ENCODE measurements at regions of chr3 and their contacts with region 1.

Region 1: DNA sequence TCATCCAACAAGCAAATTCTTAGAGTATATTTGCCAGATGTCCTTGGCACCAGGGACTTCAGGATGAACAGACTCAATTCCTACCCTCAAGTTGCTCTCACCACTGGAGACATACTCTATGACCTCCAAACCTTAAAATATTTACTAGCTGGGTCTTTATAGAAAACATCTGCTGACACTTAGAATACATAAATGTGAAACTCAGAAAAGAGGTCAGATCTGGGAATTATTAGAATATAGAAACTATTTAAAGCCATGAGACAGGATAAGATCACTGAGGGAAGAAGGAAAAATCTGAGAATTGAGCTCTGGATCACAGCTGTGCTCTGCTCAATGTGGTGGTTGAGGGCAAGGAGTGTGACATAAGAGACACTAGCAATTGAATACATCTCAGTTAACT is 695.4 kb upstream of the UBE2E2 start:
- DNase-seq: no peak
- CTCF ChIP-seq: no peak

Region 2: GRCh38 chr3:22244761-22245521 is 262.8 kb before region 1 on chr3:
- CTCF ChIA-PET with region 1: no interaction called
- POLR2A ChIA-PET with region 1: no interaction called
- DNase-seq: no peak
- CTCF ChIP-seq: no peak

Region 3: DNA sequence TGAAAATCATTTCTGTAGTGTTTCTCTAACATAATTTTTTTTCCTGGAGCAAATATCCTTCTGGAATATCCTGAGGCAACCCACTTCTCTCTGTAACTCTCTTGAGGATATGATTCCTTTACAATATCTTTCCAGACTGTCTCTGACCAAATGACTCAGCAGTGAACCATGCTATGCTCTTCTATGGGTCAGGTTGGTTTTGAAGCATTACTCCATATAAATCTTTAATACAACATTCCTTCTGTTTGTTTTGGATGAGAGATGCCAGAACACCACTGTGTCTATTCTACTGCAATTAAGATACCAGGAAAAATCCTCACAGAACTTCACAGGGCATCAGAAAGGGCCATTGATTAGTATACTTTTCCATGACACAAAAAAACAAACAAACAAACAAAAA is 130.3 kb before region 1 on chr3:
- CTCF ChIA-PET with region 1: no interaction called
- POLR2A ChIA-PET with region 1: no interaction called
- DNase-seq: no peak
- CTCF ChIP-seq: no peak

Region 4: DNA sequence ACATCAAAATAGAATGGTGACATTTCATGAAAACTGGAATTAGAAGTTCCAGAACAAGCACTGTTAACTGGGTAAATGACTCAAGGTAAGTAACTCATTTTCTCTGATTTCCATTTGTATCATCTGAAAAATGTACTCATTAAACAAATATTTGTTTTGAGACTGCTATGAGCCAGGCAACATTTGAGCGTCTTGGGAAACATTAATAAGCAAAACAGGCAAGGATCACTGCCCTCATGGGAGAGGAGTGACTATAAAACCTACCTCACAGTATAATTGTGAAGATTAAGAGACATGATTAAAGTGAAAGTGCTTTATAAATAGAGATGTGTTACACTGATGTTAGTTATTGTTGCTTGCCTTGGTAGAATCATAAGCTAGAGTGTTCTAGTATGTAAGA is 16.4 kb before region 1 on chr3:
- CTCF ChIA-PET with region 1: interaction called, 10 read pairs
- POLR2A ChIA-PET with region 1: no interaction called
- DNase-seq: no peak
- CTCF ChIP-seq: no peak

Region 5: GRCh38 chr3:22526266-22526837 is 18.6 kb after region 1 on chr3:
- CTCF ChIA-PET with region 1: no interaction called
- POLR2A ChIA-PET with region 1: no interaction called
- DNase-seq: no peak
- CTCF ChIP-seq: no peak